Head of caudate nucleus (tissue), 42 donors: ENCODE measurements at regions of chr3 and their contacts with region 1.

Region 1: GRCh38 chr3:160754855-160755747 is 930 bp upstream of the PPM1L start:
- DNase-seq: peak; percentile 88 to 98 (median 95)

Region 2: GRCh38 chr3:160565442-160566403 is 189.4 kb before region 1 on chr3 and contains the start of gene KPNA4:
- intact Hi-C with region 1: loop called (anchors 5 kb)
- DNase-seq: peak; percentile 92 to 99 (median 98)

Region 3: GRCh38 chr3:161220850-161221753 is 466.0 kb after region 1 on chr3 and contains the start of gene NMD3:
- intact Hi-C with region 1: loop called (anchors 10 kb)
- DNase-seq: peak; percentile 87 to 98 (median 94)